K562 (cell line): ENCODE measurements at regions of chr5 and their contacts with region 1.

Region 1: DNA sequence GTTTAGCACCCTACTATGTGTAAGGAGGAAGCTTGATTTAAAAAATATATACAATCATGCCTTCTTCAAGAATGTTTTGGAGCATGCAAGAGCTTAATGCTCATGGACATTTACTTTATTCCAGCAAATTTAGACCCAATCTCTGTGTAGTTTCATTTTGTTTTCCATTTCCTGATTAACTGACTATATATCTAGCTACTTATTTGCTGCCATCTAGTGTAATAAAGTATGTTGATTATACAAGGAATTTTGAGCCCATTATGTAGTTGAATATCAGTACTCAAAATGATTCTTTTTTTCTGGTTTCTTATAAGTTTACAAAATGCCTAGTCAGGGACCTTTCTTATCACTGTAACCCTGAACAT is 100.0 kb upstream of the CCDC152 start:
- DNase-seq: no peak
- ATAC-seq: no peak
- H3K4me3 ChIP-seq: no peak overlapping the region
- H3K27ac ChIP-seq: no peak overlapping the region
- H3K4me1 ChIP-seq: no peaks in the 10 kb centered on the region
- H3K27me3 ChIP-seq: no peaks in the 10 kb centered on the region; a peak in 1 of 5 replicates
- CTCF ChIP-seq: peak in 2 of 3 experiments; percentile 7 to 42; a peak in 3 of 6 replicates
- EP300 ChIP-seq: no peak
- POLR2A ChIP-seq: no peak
- RAD21 ChIP-seq: peak; percentile 36 to 57

Region 2: GRCh38 chr5:42429694-42430093 is 226.9 kb before region 1 on chr5:
- CTCF ChIA-PET with region 1: no interaction called
- POLR2A ChIA-PET with region 1: no interaction called
- in situ Hi-C with region 1: no loop called
- intact Hi-C with region 1: loop called (anchors 10 kb)
- DNase-seq: no peak
- ATAC-seq: no peak
- H3K4me3 ChIP-seq: no peak overlapping the region
- H3K27ac ChIP-seq: no peak overlapping the region
- H3K4me1 ChIP-seq: peaks cover 0 to 1% of the 10 kb centered on the region in 2 experiments; a peak in 1 of 5 replicates
- H3K27me3 ChIP-seq: peaks cover 0 to 2% of the 10 kb centered on the region in 2 experiments; a peak in 1 of 5 replicates
- CTCF ChIP-seq: no peak
- EP300 ChIP-seq: no peak
- POLR2A ChIP-seq: no peak
- RAD21 ChIP-seq: no peak